Prostate gland (tissue), 2 donors: ENCODE measurements at regions of chr17 and their contacts with region 1.

Region 1: DNA sequence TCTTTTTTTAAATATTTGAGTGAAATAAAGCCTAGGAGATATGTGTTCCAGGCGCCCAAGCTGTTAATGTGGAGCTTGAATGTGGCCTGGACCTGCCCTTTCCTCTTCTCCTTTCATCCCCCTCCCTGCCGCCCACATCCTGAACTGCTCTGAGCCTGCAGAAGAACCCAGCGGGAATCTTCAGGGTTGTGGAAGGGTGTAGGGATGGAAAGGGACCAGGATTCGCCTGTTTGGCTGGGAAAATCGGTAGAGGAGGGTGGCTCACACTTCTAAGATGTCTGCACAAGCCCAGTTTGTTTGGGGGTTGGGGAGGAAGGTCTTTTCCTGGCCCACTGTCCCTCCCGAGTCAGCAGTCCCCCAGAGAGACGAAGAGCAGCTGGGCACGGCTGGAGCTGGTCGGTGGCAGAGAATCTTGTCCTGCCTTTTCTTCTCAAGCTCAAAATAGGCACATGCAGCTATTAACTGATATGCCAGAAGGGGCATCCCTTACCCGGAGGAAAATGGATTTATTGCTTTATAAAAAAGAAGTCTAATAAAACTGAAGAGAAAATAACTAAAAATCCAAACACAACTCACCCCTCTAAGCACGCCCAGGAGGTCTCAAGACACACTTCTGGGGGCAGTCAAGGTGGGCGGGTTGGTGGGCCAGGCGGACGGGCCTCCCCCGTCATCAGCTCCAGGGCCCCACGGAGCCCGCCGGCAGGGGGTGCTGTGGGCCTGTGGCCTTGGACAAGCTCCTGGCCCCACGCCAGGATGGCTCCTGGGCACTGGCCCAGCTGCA is 11.5 kb upstream of the PITPNA start:
- DNase-seq: peak; percentile 81
- H3K4me3 ChIP-seq: no peak overlapping the region
- H3K27ac ChIP-seq: peak overlapping the region; percentile 74 to 81
- H3K4me1 ChIP-seq: peaks cover 15% of the 10 kb centered on the region
- H3K27me3 ChIP-seq: no peaks in the 10 kb centered on the region
- CTCF ChIP-seq: peak; percentile 91 to 99 (median 98)
- POLR2A ChIP-seq: no peak

Region 2: DNA sequence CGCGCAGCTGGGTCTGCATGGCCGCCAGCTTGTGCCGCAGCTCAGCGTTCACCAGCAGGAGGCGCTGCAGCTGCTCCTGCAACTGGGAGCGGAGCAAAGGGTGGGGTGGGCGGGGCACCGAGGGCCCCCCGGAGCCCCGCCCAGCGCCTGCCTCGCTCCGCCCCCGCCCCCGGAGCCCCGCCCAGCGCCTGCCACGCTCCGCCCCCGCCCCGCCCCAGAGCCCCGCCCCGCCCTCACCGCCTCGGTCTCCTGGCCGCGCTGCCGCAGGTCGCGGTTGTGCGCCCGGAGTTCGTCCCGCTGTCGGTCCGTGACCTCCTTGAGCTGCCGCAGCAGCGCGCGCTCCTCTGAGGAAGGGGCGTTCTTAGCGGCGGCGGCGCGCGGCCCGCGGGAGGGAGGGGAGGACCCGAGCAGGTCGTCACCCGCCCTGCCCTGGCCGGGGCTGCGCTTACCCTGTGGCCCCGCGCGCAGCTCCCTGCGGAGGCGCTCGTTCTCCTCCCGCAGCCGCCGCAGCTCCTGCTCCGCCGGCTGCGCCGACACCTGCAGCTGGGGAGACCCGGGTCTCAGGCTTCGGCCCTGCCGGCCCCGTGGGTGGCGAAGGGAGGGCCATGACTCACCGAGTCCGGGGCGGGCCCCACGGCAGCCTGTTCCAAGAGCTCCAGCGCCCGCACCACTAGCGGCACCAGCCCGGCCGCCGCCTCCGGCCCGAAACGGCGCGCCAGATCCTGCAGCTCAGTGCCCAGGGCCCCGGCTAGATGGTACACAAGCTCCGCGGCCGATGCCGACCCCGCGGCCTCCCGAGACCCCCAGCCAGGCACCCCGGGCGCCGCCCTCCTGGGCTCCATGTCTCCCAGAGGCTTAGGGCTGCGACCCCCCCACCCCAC is 75.1 kb after region 1 on chr17:
- intact Hi-C with region 1: loop called (anchors 5 kb)
- DNase-seq: peak; percentile 93
- H3K4me3 ChIP-seq: peak overlapping the region; percentile 72 to 77
- H3K27ac ChIP-seq: peak overlapping the region; percentile 92 to 96
- H3K4me1 ChIP-seq: peaks cover 10% of the 10 kb centered on the region
- H3K27me3 ChIP-seq: no peaks in the 10 kb centered on the region
- CTCF ChIP-seq: peak in 2 of 4 experiments; percentile 88 to 94
- POLR2A ChIP-seq: peak; percentile 74